Activated T-helper 1 cell treated with anti-CD3 and anti-CD28 coated beads, Interleukin-12 subunit alpha, Interleukin-12 subunit beta, Interleukin-2, Interleukin-4 antibody, amounts not matched to agents 30 ng/mL and 10 ng/mL and 1 ng/mL, durations not matched to agents 14 hours and 24 hours and 36 hours (primary cell): ENCODE measurements at regions of chr14 and their contacts with region 1.

Region 1: GRCh38 chr14:74493343-74494261 is at the start of gene ISCA2:
- DNase-seq: peak; percentile 99
- H3K4me3 Mint-ChIP-seq: no peak within 1 kb of the TSS
- H3K27ac Mint-ChIP-seq: peak within 1 kb of the TSS; percentile 87
- H3K4me1 Mint-ChIP-seq: peaks cover 24% of the 10 kb centered on the region
- H3K27me3 Mint-ChIP-seq: no peaks in the 10 kb centered on the region
- total RNA-seq, gene ISCA2: 18.8 and 20.2 TPM in 2 replicates

Region 2: GRCh38 chr14:73136387-73137225 is 1357.0 kb before region 1 on chr14 and contains the start of gene PSEN1:
- intact Hi-C with region 1: loop called (anchors 5 kb)
- DNase-seq: peak; percentile 98
- H3K4me3 Mint-ChIP-seq: peak within 1 kb of the TSS; percentile 86
- H3K27ac Mint-ChIP-seq: peak within 1 kb of the TSS; percentile 100
- H3K4me1 Mint-ChIP-seq: peaks cover 19% of the 10 kb centered on the region
- H3K27me3 Mint-ChIP-seq: no peaks in the 10 kb centered on the region
- total RNA-seq, gene PSEN1: 41.1 and 41.9 TPM in 2 replicates

Region 3: GRCh38 chr14:74257078-74257989 is 236.3 kb before region 1 on chr14:
- intact Hi-C with region 1: loop called (anchors 2 kb)
- DNase-seq: peak; percentile 43
- H3K4me3 Mint-ChIP-seq: peak overlapping the region; percentile 84
- H3K27ac Mint-ChIP-seq: peak overlapping the region; percentile 72
- H3K4me1 Mint-ChIP-seq: no peaks in the 10 kb centered on the region
- H3K27me3 Mint-ChIP-seq: peaks cover 26% of the 10 kb centered on the region

Region 4: GRCh38 chr14:74362361-74362915 is 131.2 kb before region 1 on chr14:
- intact Hi-C with region 1: loop called (anchors 1 kb)
- DNase-seq: peak; percentile 34
- H3K4me3 Mint-ChIP-seq: no peak overlapping the region
- H3K27ac Mint-ChIP-seq: no peak overlapping the region
- H3K4me1 Mint-ChIP-seq: no peaks in the 10 kb centered on the region
- H3K27me3 Mint-ChIP-seq: peaks cover 15% of the 10 kb centered on the region

Region 5: DNA sequence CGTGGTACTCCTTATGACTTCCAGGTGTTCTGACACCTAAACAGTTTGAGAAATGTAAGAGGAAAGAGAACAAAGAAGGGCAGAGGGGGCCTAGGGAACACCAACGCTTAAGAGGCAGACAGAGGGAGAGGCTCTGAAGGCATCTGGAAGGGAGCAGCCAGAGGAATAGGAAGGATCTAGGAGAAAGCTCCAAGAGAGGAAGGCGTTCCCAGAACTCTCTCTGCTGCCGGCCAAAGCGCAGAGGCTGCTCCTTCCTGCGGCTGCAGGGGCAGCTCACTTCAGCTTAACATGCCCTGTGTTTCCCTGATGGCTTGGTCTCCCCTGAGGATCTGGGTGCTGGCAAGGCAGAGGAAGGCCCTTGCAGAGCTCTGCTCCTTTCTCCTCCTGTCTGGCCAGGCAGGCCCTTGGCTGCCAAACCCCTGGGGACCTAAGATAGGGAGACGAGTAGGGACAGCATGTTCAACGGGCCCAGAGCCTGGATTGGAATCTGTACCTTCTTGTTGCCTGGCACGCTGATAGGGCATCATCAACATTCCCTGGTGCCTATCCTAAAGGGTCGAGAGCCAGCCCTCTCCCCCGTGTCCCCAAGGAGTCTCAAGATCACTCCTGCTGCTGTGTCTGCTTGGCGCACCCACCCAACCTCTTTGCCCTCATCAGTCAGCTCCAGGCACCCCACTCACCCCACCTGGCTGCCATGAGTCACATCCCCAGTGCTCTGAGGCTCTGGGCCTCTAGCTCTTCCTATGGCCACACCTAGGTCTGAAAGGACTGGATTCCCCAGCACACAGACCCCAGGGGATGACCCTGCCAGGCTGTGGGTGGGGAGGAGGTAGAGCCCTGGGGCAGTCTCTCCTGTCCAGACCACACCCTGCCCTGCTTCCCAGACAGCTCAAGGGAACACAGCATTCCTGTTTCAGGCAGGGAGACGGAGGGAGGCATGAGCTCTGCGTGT is 72.8 kb after region 1 on chr14:
- intact Hi-C with region 1: no loop called
- DNase-seq: no peak
- H3K4me3 Mint-ChIP-seq: no peak overlapping the region
- H3K27ac Mint-ChIP-seq: no peak overlapping the region
- H3K4me1 Mint-ChIP-seq: peaks cover 3% of the 10 kb centered on the region
- H3K27me3 Mint-ChIP-seq: peaks cover 10% of the 10 kb centered on the region

Region 6: GRCh38 chr14:74579447-74580274 is 86.1 kb after region 1 on chr14:
- intact Hi-C with region 1: loop called (anchors 1 kb)
- DNase-seq: peak; percentile 19
- H3K4me3 Mint-ChIP-seq: no peak overlapping the region
- H3K27ac Mint-ChIP-seq: peak overlapping the region; percentile 89
- H3K4me1 Mint-ChIP-seq: peaks cover 53% of the 10 kb centered on the region
- H3K27me3 Mint-ChIP-seq: no peaks in the 10 kb centered on the region

Region 7: DNA sequence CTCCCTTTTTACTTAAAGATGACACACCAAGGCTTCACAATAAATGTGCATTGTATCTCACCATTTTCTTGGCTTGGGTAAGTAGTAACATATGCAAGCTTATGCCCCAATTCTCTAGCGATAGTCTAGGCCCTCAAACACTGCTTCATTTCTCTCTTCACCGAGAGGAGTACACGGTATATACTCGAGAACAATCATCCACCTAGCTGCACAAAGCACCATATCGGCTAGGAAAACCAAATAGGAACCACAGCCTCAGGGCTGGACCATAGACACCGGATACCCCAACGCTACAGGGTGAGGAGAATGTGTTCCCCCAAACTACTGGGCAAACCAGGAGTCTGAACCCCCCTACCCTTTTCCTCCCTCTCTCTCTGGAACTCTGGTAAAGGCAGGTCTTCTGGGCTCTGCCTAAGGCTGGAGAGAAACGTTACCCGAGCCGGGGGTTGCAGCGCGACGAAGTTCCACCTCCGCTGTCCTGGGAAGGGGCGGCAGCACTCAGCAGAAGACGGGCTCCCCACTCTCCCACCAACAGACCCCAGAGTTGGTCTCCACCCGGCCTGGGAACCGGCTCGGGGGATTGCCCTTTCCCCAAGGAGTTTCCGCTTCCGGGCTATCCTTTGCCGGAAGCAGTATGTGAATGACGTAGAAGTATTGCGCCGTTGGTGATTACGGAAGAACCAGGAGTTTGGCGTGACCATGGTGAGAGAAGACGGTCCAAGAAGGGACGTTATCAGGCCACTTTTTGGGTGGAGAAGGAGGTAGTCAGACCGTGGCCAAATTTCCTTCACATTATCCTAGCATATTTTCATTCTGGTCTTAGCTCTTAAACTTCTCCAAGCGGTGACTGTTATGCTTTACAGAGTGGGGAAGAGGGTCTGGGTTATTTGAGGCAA is 219.1 kb after region 1 on chr14 and contains the starts of genes AREL1 and FCF1:
- intact Hi-C with region 1: loop called (anchors 2 kb)
- DNase-seq: peak; percentile 83
- H3K4me3 Mint-ChIP-seq: peak within 1 kb of the TSS; percentile 95
- H3K27ac Mint-ChIP-seq: peak within 1 kb of the TSS; percentile 95
- H3K4me1 Mint-ChIP-seq: peaks cover 49% of the 10 kb centered on the region
- H3K27me3 Mint-ChIP-seq: no peaks in the 10 kb centered on the region
- total RNA-seq, gene AREL1: 45.8 and 50.2 TPM in 2 replicates
- total RNA-seq, gene FCF1: 64.5 and 68.2 TPM in 2 replicates

Region 8: GRCh38 chr14:74836251-74836960 is 342.8 kb after region 1 on chr14:
- intact Hi-C with region 1: no loop called
- DNase-seq: no peak
- H3K4me3 Mint-ChIP-seq: peak overlapping the region; percentile 50
- H3K27ac Mint-ChIP-seq: peak overlapping the region; percentile 92
- H3K4me1 Mint-ChIP-seq: peaks cover 68% of the 10 kb centered on the region
- H3K27me3 Mint-ChIP-seq: no peaks in the 10 kb centered on the region

Region 9: GRCh38 chr14:75660630-75661494 is 1167.3 kb after region 1 on chr14 and contains the starts of genes ERG28 and TTLL5:
- intact Hi-C with region 1: loop called (anchors 2 kb)
- DNase-seq: peak; percentile 97
- H3K4me3 Mint-ChIP-seq: peak within 1 kb of the TSS; percentile 100
- H3K27ac Mint-ChIP-seq: peak within 1 kb of the TSS; percentile 94
- H3K4me1 Mint-ChIP-seq: peaks cover 38% of the 10 kb centered on the region
- H3K27me3 Mint-ChIP-seq: no peaks in the 10 kb centered on the region
- total RNA-seq, gene ERG28: 17.5 and 17.8 TPM in 2 replicates
- total RNA-seq, gene TTLL5: 36.2 and 39.0 TPM in 2 replicates